ENCODE measurements at regions of chr3 and their contacts with region 1.

Region 1: GRCh38 chr3:35894735-35895134 is 255.4 kb downstream of the ARPP21 start:
- DNase-seq: no peak
- ATAC-seq: no peak
- H3K4me3 ChIP-seq: no peak overlapping the region
- H3K4me3 Mint-ChIP-seq: no peak overlapping the region
- H3K27ac ChIP-seq: no peak overlapping the region
- H3K27ac Mint-ChIP-seq: no peak overlapping the region
- H3K4me1 ChIP-seq: no peaks in the 10 kb centered on the region
- H3K4me1 Mint-ChIP-seq: no peaks in the 10 kb centered on the region
- H3K27me3 ChIP-seq: no peaks in the 10 kb centered on the region
- H3K27me3 Mint-ChIP-seq: no peaks in the 10 kb centered on the region

Region 2: GRCh38 chr3:34178415-34178814 is 1716.3 kb before region 1 on chr3:
- CTCF ChIA-PET with region 1: no interaction called
- POLR2A ChIA-PET with region 1: no interaction called
- DNase-seq: no peak
- ATAC-seq: no peak
- H3K4me3 ChIP-seq: no peak overlapping the region
- H3K4me3 Mint-ChIP-seq: no peak overlapping the region
- H3K27ac ChIP-seq: no peak overlapping the region
- H3K27ac Mint-ChIP-seq: no peak overlapping the region
- H3K4me1 ChIP-seq: no peaks in the 10 kb centered on the region
- H3K4me1 Mint-ChIP-seq: no peaks in the 10 kb centered on the region
- H3K27me3 ChIP-seq: peaks cover 0 to 3% of the 10 kb centered on the region in 2 experiments
- H3K27me3 Mint-ChIP-seq: peaks cover 5 to 13% of the 10 kb centered on the region in 2 donors

Region 3: GRCh38 chr3:35760146-35760545 is 134.6 kb before region 1 on chr3:
- CTCF ChIA-PET with region 1: no interaction called
- POLR2A ChIA-PET with region 1: no interaction called
- DNase-seq: no peak
- ATAC-seq: no peak
- H3K4me3 ChIP-seq: no peak overlapping the region
- H3K4me3 Mint-ChIP-seq: no peak overlapping the region
- H3K27ac ChIP-seq: no peak overlapping the region
- H3K27ac Mint-ChIP-seq: no peak overlapping the region
- H3K4me1 ChIP-seq: no peaks in the 10 kb centered on the region
- H3K4me1 Mint-ChIP-seq: no peaks in the 10 kb centered on the region
- H3K27me3 ChIP-seq: no peaks in the 10 kb centered on the region
- H3K27me3 Mint-ChIP-seq: no peaks in the 10 kb centered on the region

Region 4: GRCh38 chr3:35908366-35909232 is 13.9 kb after region 1 on chr3:
- CTCF ChIA-PET with region 1: interaction called, 5 to 11 read pairs
- POLR2A ChIA-PET with region 1: no interaction called
- DNase-seq: peak in 23 of 35 experiments; percentile 1 to 60 (median 20)
- ATAC-seq: no peak
- H3K4me3 ChIP-seq: no peak overlapping the region
- H3K4me3 Mint-ChIP-seq: no peak overlapping the region
- H3K27ac ChIP-seq: no peak overlapping the region
- H3K27ac Mint-ChIP-seq: no peak overlapping the region
- H3K4me1 ChIP-seq: no peaks in the 10 kb centered on the region
- H3K4me1 Mint-ChIP-seq: no peaks in the 10 kb centered on the region
- H3K27me3 ChIP-seq: no peaks in the 10 kb centered on the region
- H3K27me3 Mint-ChIP-seq: peaks cover 0 to 1% of the 10 kb centered on the region in 2 donors

Region 5: GRCh38 chr3:36095238-36095637 is 200.5 kb after region 1 on chr3:
- CTCF ChIA-PET with region 1: no interaction called
- POLR2A ChIA-PET with region 1: no interaction called
- DNase-seq: no peak
- ATAC-seq: no peak
- H3K4me3 ChIP-seq: no peak overlapping the region
- H3K4me3 Mint-ChIP-seq: no peak overlapping the region
- H3K27ac ChIP-seq: no peak overlapping the region
- H3K27ac Mint-ChIP-seq: no peak overlapping the region
- H3K4me1 ChIP-seq: no peaks in the 10 kb centered on the region
- H3K4me1 Mint-ChIP-seq: no peaks in the 10 kb centered on the region
- H3K27me3 ChIP-seq: no peaks in the 10 kb centered on the region
- H3K27me3 Mint-ChIP-seq: no peaks in the 10 kb centered on the region

Measured in T-cell (primary cell).